MCF 10A (cell line): ENCODE measurements at regions of chr5 and their contacts with region 1.

Region 1: GRCh38 chr5:76256116-76256889 is 146.8 kb upstream of the IQGAP2 start:
- DNase-seq: peak; percentile 78
- H3K4me3 Mint-ChIP-seq: no peak overlapping the region
- H3K27ac Mint-ChIP-seq: no peak overlapping the region
- H3K4me1 Mint-ChIP-seq: no peaks in the 10 kb centered on the region
- H3K27me3 Mint-ChIP-seq: peaks cover 47% of the 10 kb centered on the region
- CTCF ChIP-seq: peak; percentile 68

Region 2: GRCh38 chr5:74927336-74927735 is 1329.0 kb before region 1 on chr5:
- CTCF ChIA-PET with region 1: no interaction called
- POLR2A ChIA-PET with region 1: no interaction called
- intact Hi-C with region 1: loop called (anchors 10 kb)
- DNase-seq: no peak
- H3K4me3 Mint-ChIP-seq: no peak overlapping the region
- H3K27ac Mint-ChIP-seq: no peak overlapping the region
- H3K4me1 Mint-ChIP-seq: no peaks in the 10 kb centered on the region
- H3K27me3 Mint-ChIP-seq: no peaks in the 10 kb centered on the region
- CTCF ChIP-seq: no peak

Region 3: GRCh38 chr5:75281716-75282465 is 974.4 kb before region 1 on chr5:
- CTCF ChIA-PET with region 1: no interaction called
- POLR2A ChIA-PET with region 1: no interaction called
- intact Hi-C with region 1: loop called (anchors 10 kb)
- DNase-seq: peak; percentile 10
- H3K4me3 Mint-ChIP-seq: no peak overlapping the region
- H3K27ac Mint-ChIP-seq: no peak overlapping the region
- H3K4me1 Mint-ChIP-seq: peaks cover 23% of the 10 kb centered on the region
- H3K27me3 Mint-ChIP-seq: no peaks in the 10 kb centered on the region
- CTCF ChIP-seq: no peak

Region 4: DNA sequence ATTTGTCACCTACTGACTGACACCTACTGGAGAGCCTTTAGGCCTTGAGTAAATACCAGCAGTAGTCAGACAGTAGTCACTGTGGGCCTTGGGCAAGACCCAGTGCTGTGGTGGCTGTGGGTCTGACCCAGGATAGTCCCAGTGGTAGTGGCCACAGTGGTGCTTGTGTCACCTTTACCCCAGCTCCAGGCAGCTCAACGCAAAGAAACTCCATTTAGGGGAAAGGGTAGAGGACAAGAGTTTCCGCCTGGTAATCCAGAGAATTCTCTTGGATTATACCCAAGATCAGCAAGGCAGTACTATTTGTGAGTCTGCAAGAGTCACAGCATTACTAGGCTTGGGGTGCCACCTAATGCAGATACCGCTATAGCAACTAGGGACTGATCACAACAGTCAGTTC is 773.8 kb before region 1 on chr5:
- CTCF ChIA-PET with region 1: no interaction called
- POLR2A ChIA-PET with region 1: no interaction called
- intact Hi-C with region 1: no loop called
- DNase-seq: no peak
- H3K4me3 Mint-ChIP-seq: no peak overlapping the region
- H3K27ac Mint-ChIP-seq: no peak overlapping the region
- H3K4me1 Mint-ChIP-seq: no peaks in the 10 kb centered on the region
- H3K27me3 Mint-ChIP-seq: no peaks in the 10 kb centered on the region
- CTCF ChIP-seq: no peak

Region 5: DNA sequence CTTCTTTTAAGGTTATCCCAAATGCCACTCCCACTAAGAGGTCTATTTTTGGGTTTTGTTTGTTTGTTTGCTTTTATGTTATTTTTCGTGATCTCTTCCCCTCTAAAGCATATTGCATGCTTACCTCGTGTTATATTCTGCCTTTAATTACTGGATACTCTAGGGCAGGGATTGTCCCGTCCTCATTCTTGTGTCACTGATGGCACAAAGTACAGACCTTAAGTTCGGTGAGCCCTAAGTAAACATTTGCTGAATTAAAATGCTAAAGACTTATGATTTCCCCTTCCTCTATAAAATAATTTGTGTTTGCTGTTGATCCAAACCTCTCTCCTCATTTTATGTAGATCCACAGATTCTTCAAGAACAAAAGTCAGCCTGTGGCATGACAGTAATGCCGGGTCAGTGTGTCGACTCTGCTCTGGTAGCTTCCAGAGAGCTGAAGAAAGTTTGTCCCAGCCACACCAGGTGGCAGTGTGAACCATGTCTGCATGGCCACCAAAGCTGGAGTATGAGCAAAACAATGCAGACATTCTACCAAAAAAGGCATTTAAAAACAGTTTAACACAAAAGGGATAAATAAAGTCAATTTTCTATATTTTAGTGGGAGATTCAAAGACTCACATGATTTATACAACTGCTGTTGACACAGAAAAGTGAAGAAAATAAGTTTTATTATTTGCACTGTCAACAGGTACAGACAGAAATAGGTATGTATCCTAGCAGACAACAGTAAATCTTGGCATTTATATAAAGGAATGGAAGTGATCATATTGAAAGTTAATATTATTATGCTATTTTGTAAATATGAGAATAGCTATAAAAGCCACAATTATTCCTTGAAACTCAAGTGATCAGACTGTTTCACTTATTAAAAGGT is 521.2 kb before region 1 on chr5:
- CTCF ChIA-PET with region 1: interaction called, 15 read pairs
- POLR2A ChIA-PET with region 1: interaction called, 3 read pairs
- intact Hi-C with region 1: loop called (anchors 1 kb)
- DNase-seq: peak; percentile 52
- H3K4me3 Mint-ChIP-seq: no peak overlapping the region
- H3K27ac Mint-ChIP-seq: no peak overlapping the region
- H3K4me1 Mint-ChIP-seq: no peaks in the 10 kb centered on the region
- H3K27me3 Mint-ChIP-seq: peaks cover 49% of the 10 kb centered on the region
- CTCF ChIP-seq: peak; percentile 35

Region 6: GRCh38 chr5:76433261-76433660 is 177.0 kb after region 1 on chr5:
- CTCF ChIA-PET with region 1: no interaction called
- POLR2A ChIA-PET with region 1: no interaction called
- intact Hi-C with region 1: no loop called
- DNase-seq: no peak
- H3K4me3 Mint-ChIP-seq: no peak overlapping the region
- H3K27ac Mint-ChIP-seq: no peak overlapping the region
- H3K4me1 Mint-ChIP-seq: no peaks in the 10 kb centered on the region
- H3K27me3 Mint-ChIP-seq: no peaks in the 10 kb centered on the region
- CTCF ChIP-seq: no peak